Activated CD4-positive, alpha-beta T cell treated with anti-CD3 and anti-CD28 coated beads, Interleukin-2, amount 10 ng/mL, durations not matched to agents 24 days and 14 days (primary cell): ENCODE measurements at regions of chr13 and their contacts with region 1.

Region 1: DNA sequence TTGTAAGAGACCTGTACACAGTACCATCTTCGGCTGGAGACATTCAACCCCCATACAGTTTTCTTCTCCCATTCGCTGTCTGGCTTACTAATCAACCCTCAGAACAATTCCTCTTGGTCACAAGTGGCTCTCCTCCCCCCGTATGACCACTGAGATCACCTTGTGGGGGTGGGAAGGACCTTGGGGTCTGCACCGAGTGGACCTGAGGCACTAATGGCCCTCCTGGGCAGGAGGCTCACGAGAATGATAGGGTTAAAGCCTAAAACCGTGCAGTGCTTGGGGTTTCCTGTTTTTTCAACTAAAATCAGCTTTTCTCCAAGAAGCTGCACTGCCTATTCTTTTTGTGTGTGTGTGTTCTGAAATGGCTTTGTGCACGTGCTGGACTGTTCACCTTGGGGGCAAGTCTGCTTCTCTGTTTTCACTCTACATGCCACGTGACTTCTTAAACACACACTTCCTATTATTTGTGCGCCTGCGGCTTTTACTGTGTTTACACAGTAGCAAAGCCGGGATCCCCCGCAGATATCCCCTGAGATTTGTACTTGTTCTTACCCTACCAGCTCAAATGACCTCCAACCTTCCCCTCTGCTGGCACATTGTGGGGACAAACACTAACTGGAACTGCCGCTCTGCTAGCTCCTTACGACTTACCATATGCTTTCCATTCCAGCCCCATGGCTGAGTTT is 12.3 kb downstream of the RBM26 start:
- DNase-seq: peak; percentile 78
- H3K4me3 Mint-ChIP-seq: peak overlapping the region; percentile 80
- H3K27ac Mint-ChIP-seq: peak overlapping the region; percentile 83
- H3K4me1 Mint-ChIP-seq: peaks cover 47% of the 10 kb centered on the region
- H3K27me3 Mint-ChIP-seq: no peaks in the 10 kb centered on the region

Region 2: DNA sequence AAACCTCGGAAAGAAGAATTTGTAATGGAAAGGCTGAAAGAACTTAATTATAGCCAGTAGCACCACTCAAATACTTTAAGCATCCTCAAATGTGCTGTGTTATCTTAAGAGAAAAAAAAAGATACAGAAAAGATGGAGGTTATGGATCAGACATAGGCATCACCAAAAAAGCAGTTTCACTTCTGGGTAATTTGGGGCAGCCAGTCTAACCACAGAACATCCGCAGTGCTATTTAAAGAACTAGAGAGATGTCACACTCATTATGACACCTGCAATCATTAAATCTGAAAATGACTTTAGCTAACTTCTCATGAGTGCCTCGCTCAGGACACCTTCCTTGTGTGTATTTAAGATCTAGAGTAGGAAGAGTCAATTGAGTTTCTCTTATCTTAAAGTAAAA is 199.4 kb before region 1 on chr13:
- intact Hi-C with region 1: loop called (anchors 2 kb)
- DNase-seq: peak; percentile 89
- H3K4me3 Mint-ChIP-seq: peak overlapping the region; percentile 60
- H3K27ac Mint-ChIP-seq: peak overlapping the region; percentile 39
- H3K4me1 Mint-ChIP-seq: peaks cover 50% of the 10 kb centered on the region
- H3K27me3 Mint-ChIP-seq: peaks cover 2% of the 10 kb centered on the region

Region 3: DNA sequence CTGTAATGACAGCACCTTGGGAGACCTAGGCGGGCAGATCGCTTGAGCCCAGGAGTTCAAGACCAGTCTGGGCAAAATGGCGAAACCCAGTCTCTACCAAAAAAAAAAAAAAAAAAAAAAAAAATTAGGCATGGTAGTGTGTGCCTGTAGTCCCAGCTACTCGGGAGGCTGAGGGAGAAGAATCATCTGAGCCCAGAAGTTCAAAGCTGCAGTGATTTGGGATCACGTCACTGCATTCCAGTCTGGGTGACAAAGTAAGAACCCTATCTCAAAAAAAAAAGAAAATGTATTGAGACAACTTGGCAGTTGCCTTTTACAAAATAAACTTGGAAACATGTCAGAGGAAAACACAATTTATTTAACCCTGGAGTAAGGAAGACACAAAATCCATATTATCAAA is 14.4 kb before region 1 on chr13:
- intact Hi-C with region 1: loop called (anchors 2 kb)
- DNase-seq: no peak
- H3K4me3 Mint-ChIP-seq: no peak overlapping the region
- H3K27ac Mint-ChIP-seq: no peak overlapping the region
- H3K4me1 Mint-ChIP-seq: peaks cover 30% of the 10 kb centered on the region
- H3K27me3 Mint-ChIP-seq: no peaks in the 10 kb centered on the region

Region 4: DNA sequence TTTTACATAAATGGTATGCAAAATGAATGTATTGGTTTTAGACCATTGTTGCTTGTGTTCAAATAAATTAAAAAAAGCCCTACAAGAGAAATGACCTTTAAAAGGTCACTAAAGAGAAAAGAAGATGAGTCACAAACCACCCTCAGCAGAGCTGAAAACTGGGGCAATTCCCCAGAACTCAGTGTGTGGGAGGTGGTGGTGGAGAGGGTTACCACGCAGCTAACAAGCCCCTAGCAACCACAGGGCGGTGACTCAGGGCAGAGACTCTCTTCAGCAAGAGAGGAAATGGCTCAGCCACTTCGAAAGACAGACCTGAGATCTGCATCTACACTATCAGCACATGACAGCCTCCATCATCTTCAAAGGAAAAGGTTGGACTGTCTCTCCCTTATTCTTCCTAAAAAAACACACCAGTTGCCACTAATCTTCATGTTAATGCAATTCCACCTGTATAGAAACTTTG is 57.8 kb after region 1 on chr13:
- intact Hi-C with region 1: loop called (anchors 2 kb)
- DNase-seq: peak; percentile 96
- H3K4me3 Mint-ChIP-seq: peak overlapping the region; percentile 86
- H3K27ac Mint-ChIP-seq: peak overlapping the region; percentile 99
- H3K4me1 Mint-ChIP-seq: peaks cover 66% of the 10 kb centered on the region
- H3K27me3 Mint-ChIP-seq: no peaks in the 10 kb centered on the region